Spleen (tissue), 13 donors: ENCODE measurements at regions of chr18 and their contacts with region 1.

Region 1: DNA sequence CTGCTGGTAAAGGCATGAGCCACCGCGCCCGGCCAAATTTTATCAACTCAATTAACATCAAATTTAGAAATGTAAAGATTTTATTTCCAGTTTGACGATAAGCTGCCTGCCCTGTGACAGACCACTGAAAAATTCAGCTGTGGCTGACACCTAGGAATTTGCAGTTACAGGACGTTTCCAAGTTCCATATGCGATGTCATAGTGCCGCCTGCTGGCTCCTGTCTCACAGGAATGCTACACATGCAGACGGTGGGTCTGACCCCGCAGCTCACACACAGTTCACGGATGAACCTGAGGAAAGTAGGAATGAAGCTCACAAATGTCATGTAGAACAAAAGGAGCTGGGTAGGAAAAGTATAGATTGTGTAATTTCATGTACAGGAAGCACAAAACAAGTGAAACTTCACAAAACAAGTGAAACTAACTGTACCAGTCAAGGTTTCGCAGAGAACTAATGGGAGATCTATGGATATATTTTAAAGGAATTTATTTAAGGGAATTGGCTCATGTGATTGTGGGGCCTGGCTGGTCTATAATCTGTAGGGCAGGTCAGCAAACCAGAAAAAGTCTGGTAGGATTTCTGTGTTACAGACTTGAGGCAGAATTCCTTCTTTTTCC is 13.2 kb upstream of the SEH1L start:
- DNase-seq: peak; percentile 92
- H3K4me3 ChIP-seq: no peak overlapping the region
- H3K27ac ChIP-seq: no peak overlapping the region
- H3K4me1 ChIP-seq: peaks cover 0 to 10% (median 7%) of the 10 kb centered on the region in 6 donors
- H3K27me3 ChIP-seq: no peaks in the 10 kb centered on the region
- CTCF ChIP-seq: peak; percentile 66 to 93 (median 83)
- POLR2A ChIP-seq: no peak

Region 2: GRCh38 chr18:12726774-12727550 is 207.6 kb before region 1 on chr18:
- intact Hi-C with region 1: loop called (anchors 2 kb)
- DNase-seq: no peak
- H3K4me3 ChIP-seq: no peak overlapping the region
- H3K27ac ChIP-seq: no peak overlapping the region
- H3K4me1 ChIP-seq: peaks cover 0 to 8% (median 0%) of the 10 kb centered on the region in 6 donors
- H3K27me3 ChIP-seq: no peaks in the 10 kb centered on the region
- CTCF ChIP-seq: peak; percentile 84 to 96 (median 92)
- POLR2A ChIP-seq: no peak

Region 3: GRCh38 chr18:12862467-12862866 is 72.1 kb before region 1 on chr18:
- intact Hi-C with region 1: no loop called
- DNase-seq: no peak
- H3K4me3 ChIP-seq: no peak overlapping the region
- H3K27ac ChIP-seq: peak overlapping the region in 2 of 8 donors; percentile 11 to 16
- H3K4me1 ChIP-seq: peaks cover 3 to 76% (median 41%) of the 10 kb centered on the region in 6 donors
- H3K27me3 ChIP-seq: no peaks in the 10 kb centered on the region
- CTCF ChIP-seq: no peak
- POLR2A ChIP-seq: no peak